H1 (cell line): ENCODE measurements at regions of chr1 and their contacts with region 1.

Region 1: DNA sequence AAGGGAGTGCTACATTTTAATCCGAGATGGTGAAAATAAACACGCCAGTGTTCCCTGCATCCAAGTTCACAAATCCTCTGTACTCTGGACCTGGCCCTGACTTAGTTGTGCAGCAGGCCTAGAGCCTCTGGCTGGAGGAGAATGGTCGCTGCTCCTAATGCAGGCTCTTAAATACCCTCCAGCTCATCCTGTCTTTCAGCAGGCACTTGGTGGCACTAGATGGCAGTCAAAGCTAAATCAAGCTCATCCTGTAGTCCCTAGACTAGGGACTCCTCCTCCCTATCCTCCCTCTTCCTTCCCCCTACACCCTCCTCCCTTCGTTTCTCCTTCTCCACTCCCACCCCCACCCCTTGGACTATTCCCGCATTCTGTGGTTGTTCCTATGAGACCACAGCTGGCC is 41.6 kb upstream of the MTR start:
- DNase-seq: peak in 1 of 2 experiments; percentile 41
- H3K4me3 ChIP-seq: no peak overlapping the region
- H3K27ac ChIP-seq: no peak overlapping the region
- H3K4me1 ChIP-seq: no peaks in the 10 kb centered on the region
- H3K27me3 ChIP-seq: no peaks in the 10 kb centered on the region
- CTCF ChIP-seq: peak in 2 of 3 experiments; percentile 53 to 73; a peak in 3 of 4 replicates
- EP300 ChIP-seq: no peak
- POLR2A ChIP-seq: no peak
- RAD21 ChIP-seq: peak; percentile 74

Region 2: DNA sequence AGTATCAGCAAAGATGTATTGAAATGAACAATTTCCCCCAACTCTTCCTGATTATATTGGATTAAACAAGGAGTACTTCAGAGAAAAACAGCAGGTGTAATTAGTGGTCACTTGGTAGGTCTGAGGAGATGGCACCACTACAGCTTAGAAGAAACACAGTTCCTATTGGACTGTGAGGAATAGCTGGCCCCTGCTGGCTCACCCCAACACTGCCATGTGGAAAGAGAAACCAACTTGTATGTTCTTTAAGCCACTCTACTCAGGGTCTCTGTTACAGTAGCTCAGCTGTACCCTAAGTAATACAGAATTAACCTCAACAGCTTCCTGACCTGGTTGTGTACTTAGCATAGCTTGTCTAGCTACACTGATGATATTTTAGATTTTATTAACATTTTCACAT is 15.1 kb after region 1 on chr1:
- CTCF ChIA-PET with region 1: interaction called, 26 read pairs
- POLR2A ChIA-PET with region 1: no interaction called
- DNase-seq: no peak
- H3K4me3 ChIP-seq: no peak overlapping the region
- H3K27ac ChIP-seq: no peak overlapping the region
- H3K4me1 ChIP-seq: no peaks in the 10 kb centered on the region
- H3K27me3 ChIP-seq: peaks cover 0 to under 1% (median 0%) of the 10 kb centered on the region in 4 experiments; a peak in 1 of 7 replicates
- CTCF ChIP-seq: no peak
- EP300 ChIP-seq: no peak
- POLR2A ChIP-seq: no peak
- RAD21 ChIP-seq: peak in 1 of 2 experiments; percentile 28; a peak in 1 of 4 replicates